T-cell (primary cell): ENCODE measurements at regions of chr4 and their contacts with region 1.

Region 1: GRCh38 chr4:121192480-121192879 is 28.4 kb upstream of the TNIP3 start:
- DNase-seq: peak in 1 of 35 experiments; percentile 73
- ATAC-seq: no peak
- H3K4me3 ChIP-seq: no peak overlapping the region
- H3K4me3 Mint-ChIP-seq: peak overlapping the region; percentile 58 to 73 (median 68)
- H3K27ac ChIP-seq: peak overlapping the region; percentile 16
- H3K27ac Mint-ChIP-seq: peak overlapping the region; percentile 74 to 79
- H3K4me1 ChIP-seq: peaks cover 25 to 49% of the 10 kb centered on the region in 2 experiments
- H3K4me1 Mint-ChIP-seq: peaks cover 52 to 53% (median 53%) of the 10 kb centered on the region in 3 donors
- H3K27me3 ChIP-seq: no peaks in the 10 kb centered on the region
- H3K27me3 Mint-ChIP-seq: no peaks in the 10 kb centered on the region

Region 2: GRCh38 chr4:121182296-121182695 is 10.2 kb before region 1 on chr4:
- CTCF ChIA-PET with region 1: interaction called, 9 to 18 read pairs
- POLR2A ChIA-PET with region 1: interaction called in 1 of 2 experiments, 4 read pairs
- DNase-seq: peak in 16 of 35 experiments; percentile 4 to 69 (median 20)
- ATAC-seq: peak; percentile 68 to 89 (median 83)
- H3K4me3 ChIP-seq: peak overlapping the region; percentile 45 to 49
- H3K4me3 Mint-ChIP-seq: peak overlapping the region; percentile 78 to 81 (median 78)
- H3K27ac ChIP-seq: peak overlapping the region; percentile 98
- H3K27ac Mint-ChIP-seq: peak overlapping the region; percentile 92
- H3K4me1 ChIP-seq: peaks cover 38 to 54% of the 10 kb centered on the region in 2 experiments
- H3K4me1 Mint-ChIP-seq: peaks cover 72 to 79% (median 79%) of the 10 kb centered on the region in 3 donors
- H3K27me3 ChIP-seq: no peaks in the 10 kb centered on the region
- H3K27me3 Mint-ChIP-seq: no peaks in the 10 kb centered on the region

Region 3: DNA sequence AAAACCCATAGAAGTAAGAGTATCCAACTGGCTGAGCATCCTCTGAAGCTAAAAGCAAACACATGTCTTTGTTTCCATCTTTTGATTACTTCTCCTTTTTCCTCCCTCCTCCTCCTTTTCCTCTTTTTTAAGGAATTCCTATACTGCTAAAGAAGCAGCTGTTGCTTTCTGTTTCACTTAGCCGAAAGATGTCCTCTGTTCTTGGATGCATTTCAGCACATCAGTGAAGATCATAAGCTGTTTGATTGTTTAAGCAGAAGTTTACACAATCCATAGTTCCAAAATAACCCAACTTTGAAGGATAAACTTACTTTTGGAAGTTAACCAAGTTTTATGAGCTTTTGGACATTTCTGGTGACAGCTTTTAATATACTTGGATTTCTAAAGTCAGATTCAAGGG is 26.7 kb after region 1 on chr4:
- CTCF ChIA-PET with region 1: interaction called, 10 to 14 read pairs
- POLR2A ChIA-PET with region 1: no interaction called
- DNase-seq: no peak
- ATAC-seq: no peak
- H3K4me3 ChIP-seq: no peak overlapping the region
- H3K4me3 Mint-ChIP-seq: peak overlapping the region; percentile 13 to 47 (median 17)
- H3K27ac ChIP-seq: peak overlapping the region; percentile 39
- H3K27ac Mint-ChIP-seq: peak overlapping the region; percentile 81 to 88
- H3K4me1 ChIP-seq: peaks cover 10 to 15% of the 10 kb centered on the region in 2 experiments
- H3K4me1 Mint-ChIP-seq: peaks cover 32 to 42% (median 32%) of the 10 kb centered on the region in 3 donors
- H3K27me3 ChIP-seq: no peaks in the 10 kb centered on the region
- H3K27me3 Mint-ChIP-seq: no peaks in the 10 kb centered on the region

Region 4: GRCh38 chr4:121227341-121227792 is 34.9 kb after region 1 on chr4:
- CTCF ChIA-PET with region 1: interaction called, 6 to 14 read pairs
- POLR2A ChIA-PET with region 1: no interaction called
- DNase-seq: peak in 1 of 35 experiments; percentile 49
- ATAC-seq: peak; percentile 49 to 77 (median 60)
- H3K4me3 ChIP-seq: peak overlapping the region in 1 of 2 donors; percentile 42
- H3K4me3 Mint-ChIP-seq: peak overlapping the region; percentile 61 to 77 (median 72)
- H3K27ac ChIP-seq: peak overlapping the region; percentile 81
- H3K27ac Mint-ChIP-seq: peak overlapping the region; percentile 76 to 86
- H3K4me1 ChIP-seq: peaks cover 2 to 6% of the 10 kb centered on the region in 2 experiments
- H3K4me1 Mint-ChIP-seq: peaks cover 15 to 36% (median 35%) of the 10 kb centered on the region in 3 donors
- H3K27me3 ChIP-seq: no peaks in the 10 kb centered on the region
- H3K27me3 Mint-ChIP-seq: no peaks in the 10 kb centered on the region

Region 5: DNA sequence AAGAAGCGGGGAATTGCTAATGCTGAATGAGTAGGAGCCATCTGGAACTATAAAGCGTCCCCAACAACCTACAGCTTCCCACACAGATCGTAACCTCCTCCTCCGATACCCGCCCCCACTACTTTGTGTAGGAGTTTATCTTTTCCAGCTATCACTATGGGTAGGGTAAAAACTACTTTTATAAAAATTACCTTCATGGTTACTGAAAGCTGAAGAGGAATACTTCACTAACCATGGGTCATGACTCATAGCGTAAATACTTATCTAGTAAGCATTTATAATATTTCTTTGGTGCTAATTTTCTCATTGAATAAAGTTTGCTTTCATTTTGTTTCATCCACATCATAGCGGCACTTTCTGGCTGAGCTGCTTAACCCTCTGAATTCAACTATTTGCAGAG is 51.0 kb after region 1 on chr4:
- CTCF ChIA-PET with region 1: interaction called, 5 to 19 read pairs
- POLR2A ChIA-PET with region 1: interaction called in 1 of 2 experiments, 3 read pairs
- DNase-seq: peak in 1 of 35 experiments; percentile 27
- ATAC-seq: peak in 3 of 4 experiments; percentile 48 to 65 (median 56)
- H3K4me3 ChIP-seq: peak overlapping the region in 1 of 2 donors; percentile 41
- H3K4me3 Mint-ChIP-seq: peak overlapping the region; percentile 69 to 80 (median 72)
- H3K27ac ChIP-seq: no peak overlapping the region
- H3K27ac Mint-ChIP-seq: peak overlapping the region; percentile 17 to 74
- H3K4me1 ChIP-seq: no peaks in the 10 kb centered on the region
- H3K4me1 Mint-ChIP-seq: peaks cover 14 to 18% (median 14%) of the 10 kb centered on the region in 3 donors
- H3K27me3 ChIP-seq: no peaks in the 10 kb centered on the region
- H3K27me3 Mint-ChIP-seq: no peaks in the 10 kb centered on the region

Region 6: DNA sequence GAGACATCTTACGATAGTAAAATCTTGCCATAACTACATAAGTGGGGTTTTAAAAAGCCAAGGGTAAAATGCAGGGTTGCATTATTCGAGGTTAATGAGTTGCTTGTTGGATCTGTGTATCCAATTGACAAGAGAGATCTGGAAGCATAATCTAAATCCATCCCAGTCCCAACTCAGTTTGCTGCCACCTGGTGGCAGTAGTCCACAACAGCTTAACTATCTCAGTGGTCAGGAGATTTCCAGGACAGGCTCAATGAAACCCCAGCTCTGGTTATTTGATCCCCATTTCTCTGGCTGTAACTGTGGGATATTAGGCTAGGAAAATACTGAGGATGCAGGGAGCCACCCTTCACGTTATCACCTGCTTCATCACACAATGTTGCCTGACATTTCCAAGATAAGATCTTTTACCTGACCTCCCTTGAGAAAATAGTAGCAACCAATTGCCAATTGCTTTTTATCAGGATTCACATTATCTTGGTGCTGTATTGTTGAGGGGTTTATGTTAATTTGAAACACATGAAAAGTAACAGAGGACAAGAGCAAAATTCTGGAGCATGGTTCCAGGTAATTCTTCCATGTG is 59.8 kb after region 1 on chr4:
- CTCF ChIA-PET with region 1: interaction called, 9 to 33 read pairs
- POLR2A ChIA-PET with region 1: no interaction called
- DNase-seq: peak in 31 of 35 experiments; percentile 10 to 80 (median 41)
- ATAC-seq: no peak
- H3K4me3 ChIP-seq: no peak overlapping the region
- H3K4me3 Mint-ChIP-seq: no peak overlapping the region
- H3K27ac ChIP-seq: peak overlapping the region; percentile 82
- H3K27ac Mint-ChIP-seq: peak overlapping the region in 1 of 2 donors; percentile 15
- H3K4me1 ChIP-seq: peaks cover 16 to 39% of the 10 kb centered on the region in 2 experiments
- H3K4me1 Mint-ChIP-seq: peaks cover 59 to 62% (median 60%) of the 10 kb centered on the region in 3 donors
- H3K27me3 ChIP-seq: no peaks in the 10 kb centered on the region
- H3K27me3 Mint-ChIP-seq: no peaks in the 10 kb centered on the region

Region 7: GRCh38 chr4:121307445-121308327 is 115.2 kb after region 1 on chr4:
- CTCF ChIA-PET with region 1: interaction called, 6 to 21 read pairs
- POLR2A ChIA-PET with region 1: no interaction called
- DNase-seq: peak in 23 of 35 experiments; percentile 3 to 79 (median 21)
- ATAC-seq: peak in 1 of 4 experiments; percentile 45
- H3K4me3 ChIP-seq: no peak overlapping the region
- H3K4me3 Mint-ChIP-seq: no peak overlapping the region
- H3K27ac ChIP-seq: no peak overlapping the region
- H3K27ac Mint-ChIP-seq: peak overlapping the region in 1 of 2 donors; percentile 61
- H3K4me1 ChIP-seq: peaks cover 0 to 4% of the 10 kb centered on the region in 2 experiments
- H3K4me1 Mint-ChIP-seq: peaks cover 12 to 13% (median 13%) of the 10 kb centered on the region in 3 donors
- H3K27me3 ChIP-seq: no peaks in the 10 kb centered on the region
- H3K27me3 Mint-ChIP-seq: peaks cover 0 to 2% of the 10 kb centered on the region in 2 donors

Region 8: GRCh38 chr4:121339307-121339706 is 146.8 kb after region 1 on chr4:
- CTCF ChIA-PET with region 1: no interaction called
- POLR2A ChIA-PET with region 1: no interaction called
- DNase-seq: no peak
- ATAC-seq: no peak
- H3K4me3 ChIP-seq: no peak overlapping the region
- H3K4me3 Mint-ChIP-seq: no peak overlapping the region
- H3K27ac ChIP-seq: no peak overlapping the region
- H3K27ac Mint-ChIP-seq: no peak overlapping the region
- H3K4me1 ChIP-seq: no peaks in the 10 kb centered on the region
- H3K4me1 Mint-ChIP-seq: no peaks in the 10 kb centered on the region
- H3K27me3 ChIP-seq: no peaks in the 10 kb centered on the region
- H3K27me3 Mint-ChIP-seq: peaks cover 3 to 7% of the 10 kb centered on the region in 2 donors